Heart left ventricle (tissue), 16 donors: ENCODE measurements at regions of chr5 and their contacts with region 1.

Region 1: DNA sequence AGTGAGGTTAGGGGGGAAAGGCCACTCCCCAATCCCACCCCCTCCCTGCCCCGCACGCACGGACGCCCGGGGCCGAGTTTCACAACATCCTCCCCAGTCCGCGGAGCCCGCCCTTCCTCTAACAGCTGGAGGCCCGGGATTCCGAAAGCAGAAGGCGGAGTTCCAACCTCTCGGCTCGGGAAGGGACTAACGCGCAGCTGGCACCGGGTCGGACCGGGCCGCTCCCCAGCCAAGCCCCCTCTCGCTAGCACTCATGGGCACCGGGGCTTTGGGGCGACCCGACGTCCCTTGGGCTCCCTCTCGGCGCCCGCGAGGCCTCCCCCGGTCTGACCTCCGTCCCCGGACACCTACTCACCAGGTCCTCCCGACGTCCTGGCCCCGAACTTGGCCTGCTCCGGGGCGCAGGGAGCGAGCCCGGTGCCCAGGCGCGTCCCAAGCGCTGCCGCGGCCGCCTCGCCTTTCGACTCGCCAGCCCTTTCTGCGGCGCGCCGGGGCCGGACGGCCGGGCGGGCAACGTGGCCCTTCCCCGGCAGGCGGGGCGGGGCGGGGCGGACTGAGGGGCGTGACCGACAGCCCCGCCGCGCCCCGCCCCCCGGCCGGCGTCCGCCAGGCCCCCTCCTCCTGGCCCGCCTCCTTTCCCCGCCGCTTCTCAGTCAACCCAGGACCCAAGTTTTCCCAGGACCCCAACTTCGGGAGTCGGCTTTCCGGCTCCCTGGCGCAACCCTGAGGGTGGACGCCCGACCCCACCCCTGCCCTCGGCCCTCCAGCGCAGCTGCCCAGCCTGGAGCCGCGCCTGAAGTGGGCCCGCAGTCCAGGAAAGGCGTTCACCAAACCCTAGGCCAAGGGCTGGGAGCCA is at the start of gene MGAT1:
- DNase-seq: peak; percentile 93 to 94 (median 93)
- ATAC-seq: peak; percentile 49 to 92 (median 84)
- H3K4me3 ChIP-seq: peak within 1 kb of the TSS; percentile 89 to 99 (median 96)
- H3K27ac ChIP-seq: peak within 1 kb of the TSS; percentile 94 to 100 (median 99)
- H3K4me1 ChIP-seq: peaks cover 32 to 93% (median 71%) of the 10 kb centered on the region in 12 donors
- H3K27me3 ChIP-seq: no peaks in the 10 kb centered on the region
- CTCF ChIP-seq: no peak
- POLR2A ChIP-seq: peak; percentile 22 to 86
- total RNA-seq, gene MGAT1: 50.9 to 162 (median 83.5) TPM

Region 2: DNA sequence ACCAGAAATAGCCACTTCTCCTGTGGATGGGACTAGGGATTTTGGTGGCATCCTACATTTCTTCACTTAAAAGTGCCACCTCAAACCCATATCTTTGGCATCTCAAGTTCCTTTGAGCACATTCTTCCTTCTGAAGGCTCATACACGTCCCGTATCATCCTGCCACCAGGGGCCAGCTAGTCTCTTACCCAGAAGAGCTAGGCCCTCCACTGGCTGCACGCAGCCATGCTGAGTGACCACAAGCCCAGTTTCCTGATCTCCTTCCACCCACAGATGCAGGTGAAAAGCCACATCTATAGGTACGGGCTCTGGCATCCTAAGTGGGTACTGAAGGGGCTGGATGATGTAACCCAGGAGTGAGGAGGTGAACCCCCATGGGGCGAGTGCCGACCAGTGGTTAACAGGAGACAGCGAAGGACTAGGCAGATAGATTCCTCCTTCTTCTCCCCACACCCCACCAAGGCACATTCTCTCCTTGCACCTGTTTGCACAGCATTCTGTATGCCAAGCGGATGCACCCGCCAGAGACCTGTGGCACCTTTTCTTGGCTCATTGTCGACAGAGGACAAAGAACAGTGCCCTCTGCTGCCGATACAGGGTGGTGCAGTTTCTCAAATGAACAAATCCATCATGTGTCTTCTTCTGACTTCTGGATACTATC is 196.9 kb before region 1 on chr5:
- intact Hi-C with region 1: no loop called
- DNase-seq: peak in 1 of 5 donors; percentile 25
- ATAC-seq: no peak
- H3K4me3 ChIP-seq: no peak overlapping the region
- H3K27ac ChIP-seq: no peak overlapping the region
- H3K4me1 ChIP-seq: no peaks in the 10 kb centered on the region
- H3K27me3 ChIP-seq: no peaks in the 10 kb centered on the region
- CTCF ChIP-seq: peak; percentile 39 to 68 (median 58)
- POLR2A ChIP-seq: no peak

Region 3: DNA sequence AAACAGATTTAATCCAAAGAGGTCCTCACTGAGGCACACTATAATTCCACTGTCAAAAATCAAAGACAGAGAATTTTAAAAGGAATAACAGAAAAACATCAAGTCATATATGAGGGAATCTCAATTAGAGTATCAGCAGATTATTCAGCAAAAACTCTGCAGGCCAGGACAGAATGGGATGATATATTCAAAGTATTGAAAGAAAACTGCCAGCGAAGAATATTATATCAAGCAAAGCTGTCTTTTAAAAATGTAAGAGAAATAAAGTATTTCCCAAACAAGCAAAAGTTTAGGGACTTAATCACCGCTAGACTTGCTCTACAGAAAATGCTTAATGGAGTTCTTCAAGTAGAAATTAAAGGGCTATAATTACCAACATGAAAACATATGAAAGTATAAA is 47.0 kb before region 1 on chr5:
- intact Hi-C with region 1: no loop called
- DNase-seq: no peak
- ATAC-seq: no peak
- H3K4me3 ChIP-seq: no peak overlapping the region
- H3K27ac ChIP-seq: no peak overlapping the region
- H3K4me1 ChIP-seq: no peaks in the 10 kb centered on the region
- H3K27me3 ChIP-seq: no peaks in the 10 kb centered on the region
- CTCF ChIP-seq: no peak
- POLR2A ChIP-seq: no peak

Region 4: DNA sequence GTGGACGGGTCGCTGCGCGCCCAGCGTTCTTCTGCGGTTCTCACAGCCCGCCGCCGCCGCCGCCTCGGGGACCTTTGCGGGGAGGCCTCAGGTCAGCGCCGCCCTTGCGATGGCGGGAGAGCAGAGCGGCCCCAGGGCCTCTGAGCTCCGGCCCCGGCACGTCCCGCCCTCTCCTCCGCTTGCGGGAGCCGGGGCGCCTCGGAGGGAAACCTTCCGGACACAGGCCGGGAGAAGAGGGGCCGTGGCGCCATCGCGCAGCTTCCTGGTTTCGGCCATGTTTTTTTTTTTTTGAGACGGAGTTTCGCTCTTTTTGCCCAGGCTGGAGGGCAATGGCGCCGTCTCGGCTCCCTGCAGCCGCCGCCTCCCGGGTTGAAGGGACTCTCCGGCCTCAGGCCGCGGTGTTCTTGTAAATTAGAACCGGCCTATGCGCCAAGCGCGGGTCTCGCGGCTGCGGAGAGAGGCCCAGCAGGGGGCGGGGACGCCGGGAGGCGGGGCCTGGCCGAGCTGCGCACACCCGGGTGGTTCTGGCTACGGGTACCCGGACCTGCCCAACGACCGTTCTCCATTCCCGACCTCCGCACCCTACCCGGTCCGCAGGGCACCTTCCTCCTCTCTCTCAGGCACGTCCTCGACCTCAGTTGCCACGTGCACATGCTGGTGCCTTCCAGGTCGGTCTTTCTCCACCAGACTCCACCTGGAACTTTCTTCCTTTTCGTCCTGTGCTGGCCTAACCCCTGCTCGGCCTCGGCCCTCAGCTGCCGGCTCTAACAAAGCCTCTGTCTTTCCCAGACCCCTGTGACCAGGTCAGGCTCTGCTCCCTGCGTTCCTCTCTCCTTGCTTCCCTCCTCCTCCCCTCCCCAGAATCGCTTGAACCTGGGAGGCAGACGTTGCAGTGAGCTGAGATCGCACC is 28.8 kb after region 1 on chr5:
- intact Hi-C with region 1: loop called in 1 of 10 experiments (anchors 2 kb)
- DNase-seq: peak; percentile 91 to 93 (median 93)
- ATAC-seq: peak; percentile 95 to 98 (median 98)
- H3K4me3 ChIP-seq: peak overlapping the region; percentile 67 to 100 (median 87)
- H3K27ac ChIP-seq: peak overlapping the region; percentile 94 to 100 (median 98)
- H3K4me1 ChIP-seq: peaks cover 0 to 56% (median 27%) of the 10 kb centered on the region in 12 donors
- H3K27me3 ChIP-seq: no peaks in the 10 kb centered on the region
- CTCF ChIP-seq: peak in 7 of 12 donors; percentile 13 to 49 (median 36)
- POLR2A ChIP-seq: peak; percentile 45 to 74

Region 5: DNA sequence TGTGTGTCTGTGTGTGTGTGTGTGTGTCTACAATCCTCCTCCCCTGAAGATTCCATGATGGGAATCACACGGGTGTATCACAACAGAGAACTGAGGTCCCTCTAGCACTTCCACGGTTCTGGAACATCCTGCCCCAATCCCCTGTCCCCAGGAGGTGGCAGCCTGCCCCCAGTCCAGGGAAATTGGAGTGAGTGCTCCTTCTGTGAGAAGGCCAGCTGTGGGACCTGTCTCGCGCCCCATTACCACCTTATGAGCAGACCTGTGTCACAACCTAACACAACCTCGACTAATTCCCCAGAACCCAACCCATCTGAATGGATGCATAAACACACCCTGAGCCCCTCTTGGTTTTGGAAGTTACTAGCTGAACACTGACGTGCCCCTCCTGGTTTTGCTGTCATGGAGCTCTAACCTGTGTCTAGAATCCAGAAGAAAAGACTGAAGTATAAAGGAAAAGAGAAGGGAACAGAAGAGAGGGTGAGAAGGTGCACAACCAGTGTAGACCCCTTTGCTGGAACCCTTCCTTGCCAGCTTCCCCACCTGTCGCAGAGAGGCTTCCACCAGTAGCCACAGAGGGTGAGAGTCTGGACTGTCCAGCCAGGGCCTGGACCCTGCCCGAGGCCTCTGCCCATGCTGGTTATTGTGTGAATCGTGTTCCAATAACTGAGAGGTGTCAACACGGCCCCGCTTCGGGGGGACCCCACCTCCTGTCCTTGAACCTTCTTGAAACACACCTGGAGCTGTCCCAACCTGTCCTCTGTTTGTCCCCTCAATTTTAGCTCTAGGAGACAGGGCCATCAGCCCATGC is 240.9 kb after region 1 on chr5:
- intact Hi-C with region 1: loop called in 2 of 10 experiments (anchors 5 to 10 kb)
- DNase-seq: peak in 1 of 5 donors; percentile 42
- ATAC-seq: peak in 2 of 4 donors; percentile 30 to 48
- H3K4me3 ChIP-seq: peak overlapping the region in 11 of 12 donors; percentile 11 to 65 (median 52)
- H3K27ac ChIP-seq: peak overlapping the region; percentile 60 to 92 (median 83)
- H3K4me1 ChIP-seq: peaks cover 0 to 20% (median 0%) of the 10 kb centered on the region in 12 donors
- H3K27me3 ChIP-seq: peaks cover 0 to 33% (median 9%) of the 10 kb centered on the region in 9 donors
- CTCF ChIP-seq: peak in 8 of 12 donors; percentile 6 to 48 (median 25)
- POLR2A ChIP-seq: no peak

Region 6: DNA sequence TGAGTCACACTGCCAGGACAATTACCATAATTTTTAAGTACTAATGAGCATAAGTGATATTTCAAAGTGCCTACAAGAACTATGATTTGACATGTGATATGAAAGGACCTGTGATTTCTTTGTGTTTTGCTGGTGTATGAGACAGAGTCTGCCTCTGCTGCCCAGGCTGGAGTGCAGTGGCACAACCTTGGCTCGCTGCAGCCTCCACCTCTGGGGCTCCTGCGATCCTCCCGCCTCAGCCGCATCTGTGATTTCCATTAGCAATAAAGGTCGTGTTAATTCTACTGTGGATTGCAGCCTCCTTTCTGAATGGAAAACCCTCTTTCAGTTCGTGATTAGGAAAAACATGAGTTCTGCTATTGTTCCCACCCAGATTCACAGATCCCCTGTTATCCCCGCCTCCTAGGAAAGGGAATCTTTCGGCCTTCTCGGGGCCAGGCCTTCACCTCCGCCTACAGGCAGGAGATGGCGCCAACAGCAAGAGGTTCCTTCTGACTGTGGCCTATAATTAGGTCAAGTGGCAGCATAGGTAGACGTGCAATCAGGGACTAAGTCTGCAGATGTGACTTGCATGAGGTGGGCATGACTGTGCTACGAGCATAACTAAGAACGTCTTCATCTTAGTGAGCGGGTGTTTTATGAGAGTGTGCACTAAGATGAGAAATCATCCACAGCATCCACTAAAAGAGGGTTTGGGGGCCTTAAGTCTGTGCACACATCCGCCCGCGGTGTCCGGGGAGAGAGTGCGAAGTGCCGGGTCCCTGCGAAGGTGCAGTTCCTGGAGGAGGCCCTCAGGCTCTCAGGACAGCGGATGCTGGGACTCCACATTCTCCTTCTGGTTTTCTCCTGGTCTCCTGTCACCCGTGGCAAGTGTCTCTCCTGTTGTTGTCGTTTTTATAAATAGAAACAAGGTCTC is 379.4 kb after region 1 on chr5:
- intact Hi-C with region 1: loop called in 2 of 10 experiments (anchors 10 kb)
- DNase-seq: peak; percentile 68 to 79 (median 71)
- ATAC-seq: peak; percentile 72 to 87 (median 86)
- H3K4me3 ChIP-seq: no peak overlapping the region
- H3K27ac ChIP-seq: no peak overlapping the region
- H3K4me1 ChIP-seq: peaks cover 0 to 24% (median 5%) of the 10 kb centered on the region in 12 donors
- H3K27me3 ChIP-seq: peaks cover 0 to 3% (median 0%) of the 10 kb centered on the region in 9 donors
- CTCF ChIP-seq: peak; percentile 67 to 86 (median 80)
- POLR2A ChIP-seq: no peak